ENCODE measurements at regions of chr12 and their contacts with region 1.

Region 1: DNA sequence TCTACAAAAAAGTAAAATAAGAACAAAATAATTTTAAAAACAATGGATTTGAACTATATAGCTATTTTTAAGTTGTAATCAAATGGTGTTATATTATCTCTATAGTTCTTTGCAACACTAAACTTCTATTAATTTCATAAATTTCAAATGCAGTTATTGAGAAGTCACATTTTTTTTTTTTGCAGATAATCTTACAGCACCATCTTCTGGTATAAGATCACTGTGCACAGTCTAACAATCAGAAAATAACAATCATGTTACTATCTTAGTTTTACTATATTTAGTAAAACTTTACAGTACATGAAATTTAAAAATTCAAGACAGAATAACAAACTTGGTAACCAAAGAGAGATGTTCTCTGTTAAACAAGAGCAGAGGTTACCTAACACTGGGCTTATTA is 40.6 kb downstream of the GXYLT1 start:
- DNase-seq: no peak
- ATAC-seq: no peak
- H3K4me3 ChIP-seq: no peak overlapping the region
- H3K4me3 Mint-ChIP-seq: no peak overlapping the region
- H3K27ac ChIP-seq: no peak overlapping the region
- H3K27ac Mint-ChIP-seq: no peak overlapping the region
- H3K4me1 ChIP-seq: peaks cover 0 to 6% of the 10 kb centered on the region in 2 donors
- H3K4me1 Mint-ChIP-seq: peaks cover under 1% of the 10 kb centered on the region
- H3K27me3 ChIP-seq: no peaks in the 10 kb centered on the region
- H3K27me3 Mint-ChIP-seq: no peaks in the 10 kb centered on the region
- CTCF ChIP-seq: peak; percentile 69

Region 2: DNA sequence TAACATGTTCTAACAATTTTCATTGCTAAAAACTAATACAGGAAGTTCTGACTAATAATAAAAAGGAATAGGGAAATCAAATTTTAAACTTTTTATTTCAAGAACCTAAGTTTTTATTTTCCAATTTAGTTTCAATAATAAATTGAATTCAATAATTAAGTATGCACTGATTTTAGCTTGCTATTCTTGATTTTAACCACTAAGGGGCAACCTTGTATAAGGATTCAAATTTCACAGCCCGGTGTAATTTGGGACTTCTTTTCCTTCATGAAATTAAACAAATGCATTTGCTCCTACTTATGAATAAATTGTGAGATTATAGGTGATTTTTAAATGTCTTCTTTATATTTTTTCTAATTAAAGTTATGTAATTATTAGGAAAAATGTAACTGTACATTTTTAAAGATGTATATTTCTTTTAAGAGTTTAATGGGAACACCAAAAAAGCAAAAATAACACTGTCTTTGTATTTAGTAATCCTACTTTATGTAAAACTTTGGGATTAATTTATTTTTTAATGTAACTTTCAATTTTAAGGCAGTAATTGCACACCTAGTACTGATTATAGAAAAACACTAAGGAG is 1157.4 kb before region 1 on chr12:
- CTCF ChIA-PET with region 1: no interaction called
- POLR2A ChIA-PET with region 1: no interaction called
- intact Hi-C with region 1: loop called (anchors 10 kb)
- DNase-seq: peak; percentile 38
- ATAC-seq: no peak
- H3K4me3 ChIP-seq: no peak overlapping the region
- H3K4me3 Mint-ChIP-seq: no peak overlapping the region
- H3K27ac ChIP-seq: no peak overlapping the region
- H3K27ac Mint-ChIP-seq: no peak overlapping the region
- H3K4me1 ChIP-seq: no peaks in the 10 kb centered on the region
- H3K4me1 Mint-ChIP-seq: no peaks in the 10 kb centered on the region
- H3K27me3 ChIP-seq: peaks cover 0 to 3% (median 0%) of the 10 kb centered on the region in 4 experiments
- H3K27me3 Mint-ChIP-seq: peaks cover 9% of the 10 kb centered on the region
- CTCF ChIP-seq: peak; percentile 88

Region 3: DNA sequence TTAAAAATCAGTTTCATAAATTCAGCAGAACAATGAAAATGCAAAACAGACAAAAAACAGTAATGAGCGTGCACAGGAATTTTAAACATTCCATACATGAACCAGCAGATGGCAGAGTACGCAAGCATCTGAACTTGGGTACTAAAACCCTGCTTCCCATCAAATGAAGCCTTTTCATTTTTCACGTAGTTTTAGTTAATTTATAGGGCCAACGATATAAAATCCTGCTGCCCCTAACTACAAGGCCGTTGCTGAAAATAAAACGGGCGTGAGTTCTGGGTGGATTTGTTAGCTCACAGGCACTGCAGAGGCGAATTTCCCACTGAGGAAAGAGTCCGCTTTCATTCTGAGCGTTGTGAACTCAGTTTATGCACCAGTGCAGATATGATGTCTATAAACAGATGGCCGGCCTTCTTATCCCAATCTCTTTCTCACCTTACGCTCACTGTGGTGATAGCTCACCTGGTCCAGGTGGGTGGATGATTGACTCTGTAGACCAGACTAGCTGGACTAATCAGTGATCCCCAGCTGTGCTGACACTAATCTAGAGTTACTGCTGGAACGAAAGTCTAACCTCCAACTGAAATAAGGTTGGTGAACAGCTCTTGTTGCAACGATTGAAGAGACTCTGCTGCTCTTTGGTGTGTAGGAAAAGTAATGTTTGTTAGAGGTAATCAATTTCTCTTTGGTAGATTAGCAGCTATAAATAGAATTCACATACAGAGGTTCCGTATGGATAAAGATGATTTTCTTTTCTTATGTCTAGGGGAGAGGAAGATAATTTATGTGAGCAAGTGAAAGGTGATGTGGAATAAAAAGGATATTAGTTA is 826.8 kb before region 1 on chr12:
- CTCF ChIA-PET with region 1: interaction called, 8 read pairs
- POLR2A ChIA-PET with region 1: no interaction called
- intact Hi-C with region 1: loop called (anchors 2 kb)
- DNase-seq: peak; percentile 44
- ATAC-seq: no peak
- H3K4me3 ChIP-seq: no peak overlapping the region
- H3K4me3 Mint-ChIP-seq: no peak overlapping the region
- H3K27ac ChIP-seq: no peak overlapping the region
- H3K27ac Mint-ChIP-seq: no peak overlapping the region
- H3K4me1 ChIP-seq: peaks cover 0 to 13% of the 10 kb centered on the region in 2 donors
- H3K4me1 Mint-ChIP-seq: no peaks in the 10 kb centered on the region
- H3K27me3 ChIP-seq: no peaks in the 10 kb centered on the region
- H3K27me3 Mint-ChIP-seq: peaks cover 9% of the 10 kb centered on the region
- CTCF ChIP-seq: peak; percentile 73

Region 4: DNA sequence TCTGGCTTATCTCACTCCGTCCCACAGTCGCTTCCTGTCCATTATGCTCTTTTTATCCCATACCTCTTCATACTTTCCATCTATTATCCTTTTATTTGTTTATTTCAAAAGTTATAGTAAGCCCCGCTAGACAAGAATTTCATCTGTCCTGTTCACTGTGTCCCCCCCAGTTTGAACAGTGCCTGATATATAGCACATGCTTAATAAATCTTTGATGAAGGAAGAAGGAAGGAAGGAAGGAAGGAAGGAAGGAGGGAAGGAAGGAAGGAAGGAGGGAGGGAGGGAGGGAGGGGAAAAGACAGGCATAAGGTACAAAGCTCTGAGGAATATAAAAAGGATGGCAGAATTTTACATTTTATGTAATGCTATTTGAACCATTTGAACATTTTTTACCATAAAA is 284.1 kb before region 1 on chr12:
- CTCF ChIA-PET with region 1: no interaction called
- POLR2A ChIA-PET with region 1: no interaction called
- intact Hi-C with region 1: no loop called
- DNase-seq: no peak
- ATAC-seq: no peak
- H3K4me3 ChIP-seq: no peak overlapping the region
- H3K4me3 Mint-ChIP-seq: no peak overlapping the region
- H3K27ac ChIP-seq: no peak overlapping the region
- H3K27ac Mint-ChIP-seq: no peak overlapping the region
- H3K4me1 ChIP-seq: no peaks in the 10 kb centered on the region
- H3K4me1 Mint-ChIP-seq: no peaks in the 10 kb centered on the region
- H3K27me3 ChIP-seq: no peaks in the 10 kb centered on the region
- H3K27me3 Mint-ChIP-seq: no peaks in the 10 kb centered on the region
- CTCF ChIP-seq: no peak

Region 5: DNA sequence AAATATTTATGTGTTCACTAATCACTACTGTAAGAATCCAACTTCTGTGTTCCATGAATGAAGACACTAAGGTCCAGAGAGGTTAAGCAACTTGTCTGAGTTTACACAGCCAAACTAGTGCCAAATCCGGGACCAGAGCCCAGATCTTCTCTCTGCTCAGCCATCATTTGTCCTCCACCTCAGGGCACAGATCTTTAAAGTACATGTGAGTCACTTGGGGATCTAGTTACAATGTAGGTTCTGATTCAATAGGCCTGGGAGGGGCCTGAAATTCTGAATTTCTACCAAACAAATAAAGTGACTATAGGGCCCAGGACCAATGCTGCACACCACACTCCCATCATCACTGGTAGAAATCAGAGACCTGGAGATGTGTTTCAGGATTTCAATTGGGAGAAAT is 122.3 kb before region 1 on chr12:
- CTCF ChIA-PET with region 1: no interaction called
- POLR2A ChIA-PET with region 1: no interaction called
- intact Hi-C with region 1: no loop called
- DNase-seq: no peak
- ATAC-seq: no peak
- H3K4me3 ChIP-seq: no peak overlapping the region
- H3K4me3 Mint-ChIP-seq: no peak overlapping the region
- H3K27ac ChIP-seq: no peak overlapping the region
- H3K27ac Mint-ChIP-seq: no peak overlapping the region
- H3K4me1 ChIP-seq: no peaks in the 10 kb centered on the region
- H3K4me1 Mint-ChIP-seq: no peaks in the 10 kb centered on the region
- H3K27me3 ChIP-seq: no peaks in the 10 kb centered on the region
- H3K27me3 Mint-ChIP-seq: peaks cover 28% of the 10 kb centered on the region
- CTCF ChIP-seq: no peak

Region 6: GRCh38 chr12:42070036-42070435 is 34.1 kb before region 1 on chr12:
- CTCF ChIA-PET with region 1: no interaction called
- POLR2A ChIA-PET with region 1: no interaction called
- intact Hi-C with region 1: no loop called
- DNase-seq: no peak
- ATAC-seq: no peak
- H3K4me3 ChIP-seq: no peak overlapping the region
- H3K4me3 Mint-ChIP-seq: no peak overlapping the region
- H3K27ac ChIP-seq: no peak overlapping the region
- H3K27ac Mint-ChIP-seq: no peak overlapping the region
- H3K4me1 ChIP-seq: no peaks in the 10 kb centered on the region
- H3K4me1 Mint-ChIP-seq: no peaks in the 10 kb centered on the region
- H3K27me3 ChIP-seq: no peaks in the 10 kb centered on the region
- H3K27me3 Mint-ChIP-seq: no peaks in the 10 kb centered on the region
- CTCF ChIP-seq: no peak

Region 7: GRCh38 chr12:42859612-42860011 is 755.5 kb after region 1 on chr12:
- CTCF ChIA-PET with region 1: no interaction called
- POLR2A ChIA-PET with region 1: no interaction called
- intact Hi-C with region 1: no loop called
- DNase-seq: no peak
- ATAC-seq: no peak
- H3K4me3 ChIP-seq: no peak overlapping the region
- H3K4me3 Mint-ChIP-seq: no peak overlapping the region
- H3K27ac ChIP-seq: no peak overlapping the region
- H3K27ac Mint-ChIP-seq: no peak overlapping the region
- H3K4me1 ChIP-seq: no peaks in the 10 kb centered on the region
- H3K4me1 Mint-ChIP-seq: no peaks in the 10 kb centered on the region
- H3K27me3 ChIP-seq: no peaks in the 10 kb centered on the region
- H3K27me3 Mint-ChIP-seq: no peaks in the 10 kb centered on the region
- CTCF ChIP-seq: no peak

Measured in B cell (primary cell).